Posterior vena cava (tissue), 2 donors: ENCODE measurements at regions of chr2 and their contacts with region 1.

Region 1: GRCh38 chr2:113818382-113818951 is 62.0 kb upstream of the SLC35F5 start:
- DNase-seq: no peak

Region 2: GRCh38 chr2:113831161-113831560 is 12.7 kb after region 1 on chr2:
- intact Hi-C with region 1: loop called in 1 of 2 experiments (anchors 1 kb)
- DNase-seq: no peak